ENCODE measurements at regions of chr11 and their contacts with region 1.

Region 1: DNA sequence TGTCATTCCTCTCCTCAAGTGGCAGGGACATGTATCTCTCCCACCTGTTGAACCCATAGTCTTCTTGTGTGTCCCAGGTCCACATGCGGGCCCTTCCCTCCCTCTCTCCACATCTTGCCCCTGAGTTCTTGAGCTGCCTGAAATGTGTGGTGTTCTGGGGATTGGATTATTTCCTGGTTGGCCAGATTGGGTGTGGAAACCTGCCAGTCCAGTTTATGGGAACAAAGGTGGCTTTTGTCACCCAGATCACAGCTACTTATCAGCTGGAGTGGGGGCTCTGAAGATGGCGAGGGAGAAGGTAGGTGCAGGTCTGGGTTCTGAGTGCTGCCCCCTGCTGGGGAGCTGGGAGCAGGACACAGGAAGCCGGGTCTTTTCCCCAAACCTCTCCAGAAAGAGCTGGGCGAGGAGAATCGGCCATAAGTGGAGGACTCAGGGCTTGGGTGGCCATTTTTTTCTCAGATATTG is 14.2 kb downstream of the DTX4 start:
- DNase-seq: peak; percentile 75
- ATAC-seq: peak; percentile 85
- H3K4me3 Mint-ChIP-seq: no peak overlapping the region
- H3K27ac Mint-ChIP-seq: no peak overlapping the region
- H3K4me1 Mint-ChIP-seq: no peaks in the 10 kb centered on the region
- H3K27me3 Mint-ChIP-seq: no peaks in the 10 kb centered on the region

Region 2: GRCh38 chr11:59197991-59198390 is 11.8 kb after region 1 on chr11:
- CTCF ChIA-PET with region 1: interaction called, 28 read pairs
- POLR2A ChIA-PET with region 1: no interaction called
- intact Hi-C with region 1: no loop called
- DNase-seq: no peak
- ATAC-seq: no peak
- H3K4me3 Mint-ChIP-seq: no peak overlapping the region
- H3K27ac Mint-ChIP-seq: no peak overlapping the region
- H3K4me1 Mint-ChIP-seq: peaks cover 16% of the 10 kb centered on the region
- H3K27me3 Mint-ChIP-seq: peaks cover 2% of the 10 kb centered on the region

Region 3: DNA sequence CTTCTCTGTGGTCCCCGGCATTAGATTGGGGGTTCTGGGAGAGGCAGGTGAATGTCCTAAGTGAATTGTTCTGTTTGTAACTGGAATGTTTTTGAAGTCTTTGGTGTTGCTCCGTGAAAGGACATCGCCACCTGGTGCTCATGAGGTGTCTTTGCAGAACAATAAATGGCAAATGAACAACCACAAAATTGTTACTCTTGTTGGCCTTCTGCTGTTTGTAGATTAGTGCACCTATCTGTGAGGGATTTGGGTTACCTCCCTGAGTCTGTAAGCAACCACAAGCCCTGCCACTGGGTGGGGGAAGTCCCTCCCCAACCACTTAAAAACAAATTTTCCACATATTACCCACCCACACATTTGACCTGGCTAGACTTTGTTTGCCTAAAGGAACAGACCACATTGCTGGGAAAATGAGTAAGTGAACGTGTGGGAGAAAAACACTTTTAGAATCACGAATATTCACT is 21.9 kb after region 1 on chr11:
- CTCF ChIA-PET with region 1: interaction called, 20 read pairs
- POLR2A ChIA-PET with region 1: no interaction called
- intact Hi-C with region 1: no loop called
- DNase-seq: peak; percentile 52
- ATAC-seq: peak; percentile 78
- H3K4me3 Mint-ChIP-seq: no peak overlapping the region
- H3K27ac Mint-ChIP-seq: peak overlapping the region; percentile 17
- H3K4me1 Mint-ChIP-seq: peaks cover 32% of the 10 kb centered on the region
- H3K27me3 Mint-ChIP-seq: peaks cover 22% of the 10 kb centered on the region